ENCODE measurements at regions of chr22 and their contacts with region 1.

Region 1: DNA sequence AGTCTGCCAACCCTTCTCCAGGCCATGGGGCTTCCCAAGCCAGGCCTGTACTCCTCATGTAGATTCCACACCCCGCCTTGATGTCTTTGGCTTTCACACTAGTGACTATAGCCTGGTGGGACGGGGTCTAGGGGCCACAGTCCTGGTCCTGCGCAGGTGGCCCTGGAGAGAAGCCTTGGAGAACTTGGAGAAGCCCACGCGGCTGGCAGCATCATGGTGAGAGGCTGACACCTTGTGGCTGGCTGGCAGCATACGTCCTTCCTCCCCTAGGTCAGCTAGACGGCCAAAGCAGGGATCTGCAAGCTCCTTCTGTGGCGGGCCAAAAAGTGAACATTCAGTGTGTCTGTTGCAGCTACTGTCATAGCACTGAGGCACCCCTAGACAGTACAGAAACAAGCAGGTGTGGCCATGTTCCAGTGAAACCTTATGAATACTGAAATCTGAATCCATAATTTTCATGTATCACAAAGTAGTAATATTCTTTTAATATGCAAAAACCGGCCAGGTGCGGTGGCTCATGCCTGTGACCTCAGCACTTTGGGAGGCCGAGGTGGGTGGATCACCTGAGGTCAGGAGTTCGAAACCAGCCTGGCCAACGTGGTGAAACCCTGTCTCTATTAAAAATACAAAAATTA is 42.0 kb downstream of the FAM83F start:
- DNase-seq: peak; percentile 36 to 79 (median 70)
- H3K4me3 ChIP-seq: no peak overlapping the region
- H3K27ac ChIP-seq: no peak overlapping the region
- H3K27me3 ChIP-seq: peaks cover 0 to 53% (median 0%) of the 10 kb centered on the region in 45 donors
- CTCF ChIP-seq: peak; percentile 20 to 82 (median 67)

Region 2: DNA sequence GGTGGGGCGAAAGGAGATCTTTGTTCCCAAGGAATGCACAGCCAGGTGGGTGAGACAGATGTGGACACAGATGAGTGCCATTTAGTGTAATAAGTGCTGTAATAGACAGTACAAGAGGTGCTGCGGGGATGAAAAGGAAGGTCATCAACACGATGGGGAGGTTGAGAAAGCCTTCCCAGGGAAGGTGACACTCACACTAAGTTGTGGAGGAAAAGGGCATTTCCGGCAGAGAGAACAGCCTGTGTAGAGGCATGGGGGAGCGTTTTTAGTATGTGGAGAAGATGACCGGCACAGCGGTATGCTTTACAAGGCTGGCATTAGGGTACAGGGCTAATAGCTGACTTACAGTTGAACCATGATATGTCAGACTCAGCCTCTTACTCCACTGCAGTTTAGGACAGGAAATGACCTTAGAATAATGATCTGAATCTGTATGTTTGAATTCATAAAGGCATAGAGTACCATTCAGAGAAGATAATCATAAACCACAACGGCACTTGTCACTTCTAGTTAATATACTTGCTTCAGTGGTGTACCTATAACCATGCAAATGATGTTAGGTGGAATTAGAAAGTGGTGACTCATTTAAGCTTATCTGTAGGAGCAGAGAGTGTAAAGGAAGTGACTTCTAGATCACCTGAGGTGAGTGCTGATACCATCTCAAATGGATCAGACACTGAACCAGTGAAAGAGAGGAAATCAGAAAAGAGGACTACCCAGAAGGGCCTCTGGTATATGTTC is 18.6 kb after region 1 on chr22:
- intact Hi-C with region 1: no loop called
- DNase-seq: no peak
- H3K4me3 ChIP-seq: no peak overlapping the region
- H3K27ac ChIP-seq: no peak overlapping the region
- H3K27me3 ChIP-seq: no peaks in the 10 kb centered on the region
- CTCF ChIP-seq: no peak

Region 3: GRCh38 chr22:40332319-40332781 is 295.6 kb after region 1 on chr22:
- intact Hi-C with region 1: loop called in 1 of 2 experiments (anchors 5 kb)
- DNase-seq: no peak
- H3K4me3 ChIP-seq: no peak overlapping the region
- H3K27ac ChIP-seq: peak overlapping the region in 43 of 59 donors; percentile 2 to 83 (median 36)
- H3K27me3 ChIP-seq: no peaks in the 10 kb centered on the region
- CTCF ChIP-seq: no peak